Activated naive CD4-positive, alpha-beta T cell treated with anti-CD3 and anti-CD28 coated beads for 36 hours (primary cell): ENCODE measurements at regions of chrX and their contacts with region 1.

Region 1: GRCh38 chrX:111098874-111099273 is 2.9 kb downstream of the PAK3 start:
- DNase-seq: peak; percentile 72
- H3K4me3 Mint-ChIP-seq: no peak overlapping the region
- H3K27ac Mint-ChIP-seq: no peak overlapping the region
- H3K4me1 Mint-ChIP-seq: peaks cover 9% of the 10 kb centered on the region
- H3K27me3 Mint-ChIP-seq: peaks cover 9% of the 10 kb centered on the region

Region 2: GRCh38 chrX:110450050-110450449 is 648.8 kb before region 1 on chrX:
- CTCF ChIA-PET with region 1: no interaction called
- intact Hi-C with region 1: loop called (anchors 1 kb)
- DNase-seq: peak; percentile 68
- H3K4me3 Mint-ChIP-seq: no peak overlapping the region
- H3K27ac Mint-ChIP-seq: no peak overlapping the region
- H3K4me1 Mint-ChIP-seq: no peaks in the 10 kb centered on the region
- H3K27me3 Mint-ChIP-seq: peaks cover 4% of the 10 kb centered on the region

Region 3: DNA sequence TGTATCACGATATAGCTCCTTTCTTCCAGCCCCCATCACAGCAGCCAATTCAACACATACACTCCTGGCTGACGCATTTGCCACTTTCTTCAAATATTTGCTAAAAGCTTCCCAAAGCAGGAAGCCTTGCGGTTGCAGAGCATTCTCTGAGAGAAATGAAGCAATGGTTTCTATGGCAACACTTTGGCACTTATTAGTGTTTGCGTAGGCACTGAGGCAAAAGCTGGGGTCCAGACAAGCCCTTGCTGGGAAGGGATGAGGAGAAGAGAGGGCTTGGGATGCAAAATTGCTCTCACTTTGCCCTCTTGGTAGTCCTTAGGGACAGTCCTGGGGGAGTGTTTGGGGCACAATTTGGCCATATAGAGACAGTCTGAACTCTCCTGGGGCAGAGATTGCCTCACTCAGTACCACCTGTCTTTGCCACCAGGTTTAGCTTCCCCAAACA is 57.8 kb before region 1 on chrX:
- CTCF ChIA-PET with region 1: interaction called, 3 read pairs
- intact Hi-C with region 1: loop called (anchors 2 kb)
- DNase-seq: peak; percentile 18
- H3K4me3 Mint-ChIP-seq: no peak overlapping the region
- H3K27ac Mint-ChIP-seq: no peak overlapping the region
- H3K4me1 Mint-ChIP-seq: peaks cover 3% of the 10 kb centered on the region
- H3K27me3 Mint-ChIP-seq: no peaks in the 10 kb centered on the region

Region 4: GRCh38 chrX:111244235-111244750 is 145.4 kb after region 1 on chrX:
- CTCF ChIA-PET with region 1: interaction called, 4 read pairs
- intact Hi-C with region 1: loop called (anchors 1 kb)
- DNase-seq: no peak
- H3K4me3 Mint-ChIP-seq: no peak overlapping the region
- H3K27ac Mint-ChIP-seq: no peak overlapping the region
- H3K4me1 Mint-ChIP-seq: no peaks in the 10 kb centered on the region
- H3K27me3 Mint-ChIP-seq: peaks cover 4% of the 10 kb centered on the region

Region 5: DNA sequence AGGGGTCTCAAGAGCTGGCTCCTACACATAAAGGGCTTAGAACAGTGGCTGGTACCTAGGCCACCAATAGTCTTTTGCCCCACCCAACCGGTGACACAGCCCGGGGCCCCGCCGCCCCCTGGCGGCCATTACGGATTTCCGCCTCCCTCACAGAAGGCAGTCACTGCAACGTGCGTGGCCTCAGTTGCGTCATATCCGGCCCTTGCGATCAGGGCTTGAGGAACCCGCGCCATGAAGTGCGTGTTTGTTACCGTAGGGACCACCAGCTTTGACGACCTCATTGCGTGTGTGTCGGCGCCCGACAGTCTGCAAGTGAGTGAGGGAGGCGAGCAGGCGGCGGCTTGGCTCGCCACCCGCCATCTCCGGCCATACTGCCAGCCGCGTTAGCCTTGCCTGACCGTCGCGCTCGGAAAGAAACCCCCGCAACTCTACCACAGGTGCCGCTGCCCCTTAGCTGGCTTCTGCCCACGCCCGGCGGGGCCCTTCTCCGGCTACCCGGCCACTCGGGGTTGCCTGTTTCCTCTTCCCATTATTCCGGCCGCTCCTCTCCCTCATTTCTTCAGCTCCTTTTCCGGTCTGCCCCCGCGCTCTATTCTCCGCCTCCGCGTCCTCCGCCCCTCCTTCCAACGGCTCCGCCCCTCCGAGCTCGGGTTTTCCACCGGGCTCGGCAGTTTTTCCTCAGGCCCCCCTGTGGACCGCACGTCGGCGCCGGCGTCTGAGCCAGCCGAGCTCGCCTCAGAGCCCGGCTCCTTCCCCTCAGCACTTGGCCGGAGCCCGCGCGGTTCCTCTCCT is 582.3 kb after region 1 on chrX and contains the start of gene ALG13:
- CTCF ChIA-PET with region 1: no interaction called
- intact Hi-C with region 1: loop called (anchors 1 kb)
- DNase-seq: peak; percentile 89
- H3K4me3 Mint-ChIP-seq: peak within 1 kb of the TSS; percentile 84
- H3K27ac Mint-ChIP-seq: peak within 1 kb of the TSS; percentile 92
- H3K4me1 Mint-ChIP-seq: peaks cover 26% of the 10 kb centered on the region
- H3K27me3 Mint-ChIP-seq: no peaks in the 10 kb centered on the region
- total RNA-seq, gene ALG13: 44.7 to 47.8 TPM